ENCODE measurements at regions of chrX and their contacts with region 1.

Region 1: GRCh38 chrX:34656842-34657725 is at the start of gene TMEM47:
- DNase-seq: peak; percentile 73
- ATAC-seq: peak; percentile 94
- H3K4me3 ChIP-seq: peak within 1 kb of the TSS; percentile 71
- H3K27ac ChIP-seq: no peak within 1 kb of the TSS
- H3K4me1 ChIP-seq: peaks cover 3% of the 10 kb centered on the region; the same call in 1 of the 2 replicates
- H3K27me3 ChIP-seq: no peaks in the 10 kb centered on the region
- CTCF ChIP-seq: no peak
- total RNA-seq, gene TMEM47: 4.7 TPM in 2 replicates

Region 2: DNA sequence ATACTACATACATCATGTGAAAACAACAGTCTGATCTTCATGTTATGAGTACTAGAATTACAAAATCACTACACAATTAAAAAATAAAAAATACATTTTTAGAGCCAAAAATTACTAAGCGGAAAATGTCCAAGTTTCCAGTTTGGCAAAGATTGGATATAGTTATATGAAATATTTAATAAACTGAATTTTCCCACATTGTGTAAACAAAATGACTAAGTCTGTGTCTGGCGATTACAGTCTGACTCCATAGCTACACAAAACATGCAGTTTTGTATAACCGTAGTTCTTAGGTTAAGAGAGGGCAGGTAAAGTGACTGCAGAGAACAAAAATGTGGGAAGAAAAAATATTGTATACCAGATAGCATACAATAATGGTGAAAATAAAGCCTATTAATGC is 59.2 kb after region 1 on chrX:
- CTCF ChIA-PET with region 1: no interaction called
- POLR2A ChIA-PET with region 1: no interaction called
- intact Hi-C with region 1: loop called (anchors 10 kb)
- DNase-seq: peak; percentile 35
- ATAC-seq: peak; percentile 85
- H3K4me3 ChIP-seq: no peak overlapping the region
- H3K27ac ChIP-seq: 0 out of 2 replicates have a peak overlapping the region, but pooled peaks have one; percentile 21
- H3K4me1 ChIP-seq: no peaks in the 10 kb centered on the region
- H3K27me3 ChIP-seq: no peaks in the 10 kb centered on the region
- CTCF ChIP-seq: no peak

Region 3: GRCh38 chrX:34873500-34874225 is 216.6 kb after region 1 on chrX:
- CTCF ChIA-PET with region 1: no interaction called
- POLR2A ChIA-PET with region 1: interaction called, 6 read pairs
- intact Hi-C with region 1: loop called (anchors 1 kb)
- DNase-seq: peak; percentile 63
- ATAC-seq: peak; percentile 29
- H3K4me3 ChIP-seq: peak overlapping the region; percentile 43; the same call in 1 of the 2 replicates
- H3K27ac ChIP-seq: peak overlapping the region; percentile 97
- H3K4me1 ChIP-seq: peaks cover 43% of the 10 kb centered on the region
- H3K27me3 ChIP-seq: no peaks in the 10 kb centered on the region
- CTCF ChIP-seq: no peak